Naive thymus-derived CD4-positive, alpha-beta T cell (primary cell): ENCODE measurements at regions of chrX and their contacts with region 1.

Region 1: GRCh38 chrX:54639346-54640102 is 109.5 kb downstream of the GNL3L start:
- DNase-seq: peak; percentile 73 to 95 (median 89)
- ATAC-seq: peak; percentile 93
- H3K4me3 ChIP-seq: peak overlapping the region; percentile 64
- H3K4me3 Mint-ChIP-seq: peak overlapping the region; percentile 74 to 98 (median 94)
- H3K27ac ChIP-seq: peak overlapping the region; percentile 98
- H3K27ac Mint-ChIP-seq: peak overlapping the region; percentile 96 to 100 (median 99)
- H3K4me1 ChIP-seq: peaks cover 4% of the 10 kb centered on the region in 2 donors
- H3K4me1 Mint-ChIP-seq: peaks cover 0 to 16% (median 10%) of the 10 kb centered on the region in 7 donors
- H3K27me3 ChIP-seq: no peaks in the 10 kb centered on the region
- H3K27me3 Mint-ChIP-seq: no peaks in the 10 kb centered on the region

Region 2: GRCh38 chrX:54044126-54044876 is 595.2 kb before region 1 on chrX and contains the start of gene PHF8:
- CTCF ChIA-PET with region 1: no interaction called
- POLR2A ChIA-PET with region 1: interaction called, 25 read pairs
- intact Hi-C with region 1: loop called in 1 of 2 experiments (anchors 1 kb)
- DNase-seq: peak; percentile 84 to 96 (median 94)
- ATAC-seq: peak; percentile 90
- H3K4me3 ChIP-seq: peak within 1 kb of the TSS; percentile 80
- H3K4me3 Mint-ChIP-seq: peak within 1 kb of the TSS; percentile 84 to 96 (median 94)
- H3K27ac ChIP-seq: peak within 1 kb of the TSS; percentile 95
- H3K27ac Mint-ChIP-seq: peak within 1 kb of the TSS; percentile 93 to 99 (median 97)
- H3K4me1 ChIP-seq: peaks cover 9% of the 10 kb centered on the region in 2 donors
- H3K4me1 Mint-ChIP-seq: peaks cover 8 to 33% (median 17%) of the 10 kb centered on the region in 7 donors
- H3K27me3 ChIP-seq: no peaks in the 10 kb centered on the region
- H3K27me3 Mint-ChIP-seq: no peaks in the 10 kb centered on the region
- total RNA-seq, gene PHF8: 48.5 to 80.2 (median 54.5) TPM

Region 3: DNA sequence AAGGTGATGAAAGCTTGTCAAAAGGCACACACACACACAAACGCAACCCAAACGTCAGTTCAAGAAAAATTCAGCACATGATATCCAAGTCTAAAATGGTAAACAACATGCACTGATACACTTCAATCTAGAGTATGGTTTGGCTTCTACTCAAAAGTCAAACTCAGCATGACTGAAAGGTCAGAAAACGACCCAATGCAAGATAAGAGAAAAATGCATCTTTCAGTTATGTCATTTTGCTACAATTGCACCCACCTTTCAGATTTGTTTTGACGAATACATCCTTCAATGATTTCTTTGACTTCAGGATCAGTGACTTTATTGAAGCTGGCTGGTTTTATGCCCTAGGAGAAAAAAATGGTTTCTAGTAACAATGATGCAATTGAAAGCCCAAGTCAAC is 338.0 kb before region 1 on chrX:
- CTCF ChIA-PET with region 1: no interaction called
- POLR2A ChIA-PET with region 1: no interaction called
- intact Hi-C with region 1: no loop called
- DNase-seq: no peak
- ATAC-seq: no peak
- H3K4me3 ChIP-seq: no peak overlapping the region
- H3K4me3 Mint-ChIP-seq: no peak overlapping the region
- H3K27ac ChIP-seq: no peak overlapping the region
- H3K27ac Mint-ChIP-seq: no peak overlapping the region
- H3K4me1 ChIP-seq: no peaks in the 10 kb centered on the region
- H3K4me1 Mint-ChIP-seq: no peaks in the 10 kb centered on the region
- H3K27me3 ChIP-seq: no peaks in the 10 kb centered on the region
- H3K27me3 Mint-ChIP-seq: no peaks in the 10 kb centered on the region

Region 4: DNA sequence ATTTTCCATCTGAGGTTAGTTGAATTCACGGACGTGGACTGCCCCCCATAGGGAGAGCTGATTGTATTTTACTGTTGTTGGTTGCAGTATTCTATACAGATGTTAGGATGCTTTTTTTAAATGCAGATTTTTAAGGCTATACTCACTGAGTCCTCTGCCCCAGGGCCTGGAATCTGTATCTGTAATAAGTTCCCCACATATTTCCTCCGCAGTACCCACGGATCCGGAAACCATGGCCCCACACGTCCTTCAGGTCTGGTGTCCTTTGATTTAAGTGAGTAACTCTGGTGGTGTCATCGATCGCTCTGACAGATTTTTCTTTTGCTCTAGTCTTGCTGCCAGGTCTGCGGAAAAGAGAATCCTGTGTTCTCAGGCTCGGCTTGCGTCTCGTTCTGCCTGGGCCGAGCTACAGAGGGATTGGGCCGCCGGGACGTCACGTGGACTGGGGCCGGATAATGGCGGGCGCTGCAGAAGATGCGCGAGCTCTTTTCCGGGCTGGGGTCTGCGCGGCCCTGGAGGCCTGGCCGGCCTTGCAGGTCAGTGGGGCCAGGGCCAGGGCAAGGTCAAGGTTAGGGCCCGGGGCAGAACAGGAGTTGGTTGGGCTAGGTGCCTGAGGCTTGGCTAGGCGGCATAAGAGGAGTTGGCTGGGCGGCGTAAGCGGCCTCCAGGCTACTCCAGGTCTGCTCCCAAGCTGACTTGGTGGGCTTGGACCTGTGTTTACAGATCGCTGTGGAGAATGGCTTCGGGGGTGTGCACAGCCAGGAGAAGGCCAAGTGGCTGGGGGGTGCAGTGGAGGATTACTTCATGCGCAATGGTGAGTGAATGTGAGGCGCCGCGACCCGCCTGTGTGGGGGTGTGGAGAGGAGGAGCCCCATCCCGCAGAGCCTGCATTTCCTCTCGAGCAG is 199.3 kb before region 1 on chrX and contains the start of gene TSR2:
- CTCF ChIA-PET with region 1: no interaction called
- POLR2A ChIA-PET with region 1: interaction called, 9 read pairs
- intact Hi-C with region 1: loop called (anchors 1 kb)
- DNase-seq: peak; percentile 50 to 80 (median 74)
- ATAC-seq: peak; percentile 99
- H3K4me3 ChIP-seq: peak within 1 kb of the TSS; percentile 94
- H3K4me3 Mint-ChIP-seq: peak within 1 kb of the TSS; percentile 84 to 100 (median 92)
- H3K27ac ChIP-seq: peak within 1 kb of the TSS; percentile 81
- H3K27ac Mint-ChIP-seq: peak within 1 kb of the TSS; percentile 73 to 94 (median 86)
- H3K4me1 ChIP-seq: peaks cover 8 to 12% of the 10 kb centered on the region in 2 donors
- H3K4me1 Mint-ChIP-seq: peaks cover 15 to 39% (median 26%) of the 10 kb centered on the region in 7 donors
- H3K27me3 ChIP-seq: no peaks in the 10 kb centered on the region
- H3K27me3 Mint-ChIP-seq: no peaks in the 10 kb centered on the region
- total RNA-seq, gene TSR2: 33.6 to 43.3 (median 40.5) TPM

Region 5: DNA sequence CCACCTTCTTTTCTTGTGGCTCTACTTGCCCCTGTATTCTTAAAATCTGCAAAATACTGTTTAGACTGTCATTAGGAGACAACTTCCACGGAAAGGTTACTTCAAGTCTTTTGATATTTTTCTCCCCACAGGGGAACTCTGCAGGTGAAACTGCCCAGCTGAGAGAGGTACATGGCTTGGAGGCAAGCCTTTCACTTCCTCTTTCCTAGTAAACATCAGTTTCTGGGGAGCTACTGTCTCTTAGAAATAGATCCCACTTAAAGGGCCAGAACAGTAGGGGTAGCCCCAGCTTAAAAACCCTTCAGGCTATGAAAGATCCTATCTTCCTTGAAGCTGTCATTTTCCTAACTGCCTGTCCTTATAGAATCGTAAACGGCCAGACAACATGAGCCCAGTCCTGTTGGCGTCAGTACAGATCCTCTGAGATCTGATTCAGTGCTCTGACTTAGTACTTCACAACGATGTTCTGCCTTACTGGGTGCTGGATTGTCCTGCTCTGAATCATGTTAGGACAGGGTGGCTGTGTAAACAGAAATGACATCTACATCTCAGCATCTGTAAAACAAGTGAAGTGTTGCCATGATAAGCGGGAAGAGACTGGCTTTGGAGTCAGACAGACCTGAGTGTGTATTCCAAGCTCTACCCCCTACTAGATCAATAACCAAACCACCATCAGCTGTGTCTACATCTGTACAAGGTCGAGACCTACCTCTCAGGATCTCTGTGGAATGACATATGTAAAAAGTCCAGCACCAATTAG is 56.5 kb after region 1 on chrX:
- CTCF ChIA-PET with region 1: no interaction called
- POLR2A ChIA-PET with region 1: no interaction called
- intact Hi-C with region 1: loop called in 1 of 2 experiments (anchors 2 kb)
- DNase-seq: no peak
- ATAC-seq: no peak
- H3K4me3 ChIP-seq: no peak overlapping the region
- H3K4me3 Mint-ChIP-seq: no peak overlapping the region
- H3K27ac ChIP-seq: no peak overlapping the region
- H3K27ac Mint-ChIP-seq: no peak overlapping the region
- H3K4me1 ChIP-seq: no peaks in the 10 kb centered on the region
- H3K4me1 Mint-ChIP-seq: no peaks in the 10 kb centered on the region
- H3K27me3 ChIP-seq: no peaks in the 10 kb centered on the region
- H3K27me3 Mint-ChIP-seq: peaks cover 0 to 5% (median 3%) of the 10 kb centered on the region in 5 donors

Region 6: GRCh38 chrX:54999717-55000598 is 360.4 kb after region 1 on chrX and contains the start of gene APEX2:
- CTCF ChIA-PET with region 1: no interaction called
- POLR2A ChIA-PET with region 1: interaction called, 4 read pairs
- intact Hi-C with region 1: loop called (anchors 1 kb)
- DNase-seq: peak; percentile 66 to 89 (median 85)
- ATAC-seq: peak; percentile 97
- H3K4me3 ChIP-seq: peak within 1 kb of the TSS; percentile 95
- H3K4me3 Mint-ChIP-seq: peak within 1 kb of the TSS; percentile 90 to 97 (median 94)
- H3K27ac ChIP-seq: peak within 1 kb of the TSS; percentile 90
- H3K27ac Mint-ChIP-seq: peak within 1 kb of the TSS; percentile 94 to 99 (median 96)
- H3K4me1 ChIP-seq: peaks cover 9 to 17% of the 10 kb centered on the region in 2 donors
- H3K4me1 Mint-ChIP-seq: peaks cover 8 to 35% (median 26%) of the 10 kb centered on the region in 7 donors
- H3K27me3 ChIP-seq: no peaks in the 10 kb centered on the region
- H3K27me3 Mint-ChIP-seq: no peaks in the 10 kb centered on the region
- total RNA-seq, gene APEX2: 6.5 to 24.6 (median 12.2) TPM